ENCODE measurements at regions of chr9 and their contacts with region 1.

Region 1: DNA sequence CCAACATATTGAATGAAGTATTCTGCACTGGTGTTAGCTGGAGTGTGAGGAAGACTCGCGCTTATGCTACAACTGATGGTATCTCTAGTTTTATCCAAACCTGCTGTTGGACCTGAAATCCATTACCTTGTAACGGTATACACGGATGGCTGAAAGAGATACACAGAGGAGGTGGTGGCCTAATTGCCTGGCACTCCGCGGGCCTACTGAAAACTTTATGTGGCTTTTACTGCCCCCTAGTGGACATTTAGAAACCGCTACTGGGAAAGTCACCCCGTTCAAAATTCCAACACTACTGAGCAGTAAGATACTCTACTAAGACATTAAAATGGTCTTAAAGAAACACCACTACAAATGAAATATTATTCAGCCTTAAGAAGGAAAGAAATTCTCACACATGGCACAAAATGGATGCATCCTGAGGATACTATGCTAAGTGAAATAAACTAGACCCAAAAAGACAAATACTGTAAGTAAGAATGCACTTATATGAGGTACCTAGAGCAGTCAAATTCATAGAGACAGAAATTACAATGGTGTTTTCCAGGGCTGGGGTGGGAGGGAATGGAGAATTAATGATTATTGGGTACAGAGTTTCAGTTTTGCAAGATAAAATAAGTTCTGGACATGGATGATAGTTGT is 100.4 kb downstream of the TTLL11 start:
- DNase-seq: peak in 7 of 10 donors; percentile 53 to 77 (median 70)
- H3K4me3 ChIP-seq: no peak overlapping the region
- H3K27ac ChIP-seq: peak overlapping the region in 13 of 59 donors; percentile 2 to 58 (median 26)
- H3K27me3 ChIP-seq: no peaks in the 10 kb centered on the region
- CTCF ChIP-seq: peak; percentile 79 to 97 (median 91)

Region 2: DNA sequence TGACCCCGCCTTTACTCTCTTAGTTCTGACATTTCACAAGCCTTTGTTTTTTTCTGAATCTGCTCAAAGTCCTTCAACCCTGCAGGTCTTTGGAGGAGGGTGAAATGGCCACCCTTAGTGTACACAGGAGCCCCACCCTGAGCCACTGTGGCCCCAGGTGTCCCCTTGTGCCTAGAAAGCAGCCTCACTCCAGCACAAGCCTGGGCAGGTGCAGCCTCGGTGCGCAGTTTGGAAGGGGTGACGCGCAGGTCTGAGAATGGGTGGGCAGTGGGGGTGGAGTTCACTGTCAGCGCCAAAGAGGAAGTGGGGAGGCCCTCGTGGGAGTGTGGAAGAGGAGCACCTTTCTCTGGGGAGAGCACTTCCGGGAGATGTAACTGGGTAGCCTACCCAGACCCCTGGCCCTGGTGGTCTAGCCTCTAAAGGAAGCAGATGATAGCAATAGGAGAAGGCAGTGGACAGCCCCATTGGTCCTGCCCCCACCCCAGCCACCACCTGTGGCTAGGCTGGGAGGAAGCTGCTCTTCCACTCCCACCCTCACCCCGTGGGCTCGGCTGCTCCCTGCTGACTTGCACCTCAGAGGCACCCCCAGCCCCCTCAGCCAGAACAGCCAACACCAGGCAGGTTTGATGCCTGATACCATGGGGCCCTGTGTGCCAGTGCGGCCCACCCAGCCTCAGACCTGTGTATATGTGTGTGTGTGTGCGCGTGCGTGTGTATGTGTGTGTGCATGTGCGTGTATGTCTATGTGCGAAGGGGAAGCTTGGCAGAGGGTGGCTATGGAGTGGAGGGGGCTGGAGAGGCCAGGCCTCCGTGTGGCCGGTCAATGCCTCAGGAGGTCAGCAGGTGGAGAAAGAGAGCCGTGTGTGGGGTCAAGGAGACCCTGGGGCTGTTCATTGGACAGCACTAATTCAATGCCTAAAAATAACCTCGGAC is 358.1 kb before region 1 on chr9:
- intact Hi-C with region 1: loop called (anchors 5 to 10 kb)
- DNase-seq: peak in 2 of 10 donors; percentile 38 to 55
- H3K4me3 ChIP-seq: no peak overlapping the region
- H3K27ac ChIP-seq: peak overlapping the region in 20 of 59 donors; percentile 8 to 97 (median 90)
- H3K27me3 ChIP-seq: no peaks in the 10 kb centered on the region
- CTCF ChIP-seq: peak in 54 of 56 donors; percentile 33 to 77 (median 62)

Region 3: DNA sequence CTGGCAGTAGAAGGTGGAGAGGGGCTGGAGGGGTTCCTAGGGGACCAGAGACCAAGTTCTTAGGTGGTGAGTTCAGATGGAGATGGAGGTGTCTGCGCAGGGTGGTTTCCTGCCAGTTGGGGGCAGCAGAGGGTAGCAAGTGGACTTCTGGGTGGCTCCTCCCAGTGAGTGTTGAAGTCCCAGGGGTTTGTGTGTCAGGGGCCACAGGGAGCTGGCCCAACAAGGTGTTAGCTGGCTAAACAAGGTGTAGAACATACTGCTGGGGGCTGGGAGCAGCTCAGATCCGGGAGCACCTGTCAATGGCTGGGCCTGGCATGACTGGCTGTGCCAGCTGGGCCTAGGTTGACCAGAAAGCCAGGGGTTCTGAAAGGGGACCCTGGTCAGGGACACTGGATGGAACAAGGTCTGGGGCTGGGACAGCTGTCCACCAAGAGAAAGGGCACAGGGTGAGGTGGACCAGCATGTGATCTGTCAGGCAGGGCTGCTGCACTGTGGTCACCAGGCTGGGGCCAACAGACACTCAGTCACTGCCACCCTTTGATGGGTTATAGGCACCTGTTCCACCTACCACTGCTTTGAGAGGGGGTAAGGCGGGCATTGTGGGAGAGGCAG is 305.7 kb before region 1 on chr9:
- intact Hi-C with region 1: loop called (anchors 2 to 10 kb)
- DNase-seq: peak; percentile 72 to 85 (median 78)
- H3K4me3 ChIP-seq: no peak overlapping the region
- H3K27ac ChIP-seq: peak overlapping the region in 13 of 59 donors; percentile 4 to 71 (median 32)
- H3K27me3 ChIP-seq: no peaks in the 10 kb centered on the region
- CTCF ChIP-seq: peak; percentile 39 to 96 (median 86)

Region 4: GRCh38 chr9:121698627-121699570 is 293.8 kb before region 1 on chr9:
- intact Hi-C with region 1: loop called in 1 of 2 experiments (anchors 10 kb)
- DNase-seq: no peak
- H3K4me3 ChIP-seq: peak overlapping the region; percentile 33 to 77 (median 66)
- H3K27ac ChIP-seq: peak overlapping the region in 47 of 59 donors; percentile 2 to 88 (median 76)
- H3K27me3 ChIP-seq: no peaks in the 10 kb centered on the region
- CTCF ChIP-seq: no peak

Region 5: DNA sequence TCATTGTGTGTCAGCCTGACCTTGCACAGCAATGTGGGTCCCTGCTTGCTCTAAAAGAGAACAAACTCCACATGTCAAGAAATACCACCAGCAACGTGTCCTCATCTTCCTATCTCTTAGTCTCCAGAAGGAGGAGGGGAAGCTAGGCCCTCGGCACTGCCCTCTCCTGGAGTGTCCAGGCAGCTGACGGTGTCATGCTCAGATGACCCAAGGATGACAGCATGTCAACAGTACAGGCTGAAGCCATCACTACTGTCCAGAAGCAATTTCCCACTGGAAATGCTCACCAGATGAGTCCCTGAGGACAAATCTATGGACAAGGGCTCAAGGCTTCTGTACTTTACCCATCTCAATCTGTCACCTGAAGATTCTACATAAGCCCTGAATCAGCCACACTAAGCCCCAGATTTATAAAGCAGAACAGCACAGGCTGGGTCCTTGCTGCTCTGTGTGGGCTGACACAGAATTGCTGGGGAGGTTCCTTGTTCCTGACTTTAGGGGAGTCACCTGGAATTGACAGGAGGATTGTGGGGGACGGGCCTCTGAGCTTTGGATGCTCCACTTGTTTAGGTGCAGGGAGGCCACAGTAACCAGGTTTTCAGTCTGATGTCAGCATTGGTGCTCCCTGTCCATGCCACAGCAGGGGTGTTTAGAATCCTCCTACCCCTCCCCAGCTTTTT is 131.1 kb before region 1 on chr9:
- intact Hi-C with region 1: loop called in 1 of 2 experiments (anchors 10 kb)
- DNase-seq: peak in 6 of 10 donors; percentile 42 to 64 (median 57)
- H3K4me3 ChIP-seq: no peak overlapping the region
- H3K27ac ChIP-seq: peak overlapping the region in 22 of 59 donors; percentile 4 to 71 (median 44)
- H3K27me3 ChIP-seq: no peaks in the 10 kb centered on the region
- CTCF ChIP-seq: peak in 53 of 56 donors; percentile 21 to 73 (median 53)

Region 6: DNA sequence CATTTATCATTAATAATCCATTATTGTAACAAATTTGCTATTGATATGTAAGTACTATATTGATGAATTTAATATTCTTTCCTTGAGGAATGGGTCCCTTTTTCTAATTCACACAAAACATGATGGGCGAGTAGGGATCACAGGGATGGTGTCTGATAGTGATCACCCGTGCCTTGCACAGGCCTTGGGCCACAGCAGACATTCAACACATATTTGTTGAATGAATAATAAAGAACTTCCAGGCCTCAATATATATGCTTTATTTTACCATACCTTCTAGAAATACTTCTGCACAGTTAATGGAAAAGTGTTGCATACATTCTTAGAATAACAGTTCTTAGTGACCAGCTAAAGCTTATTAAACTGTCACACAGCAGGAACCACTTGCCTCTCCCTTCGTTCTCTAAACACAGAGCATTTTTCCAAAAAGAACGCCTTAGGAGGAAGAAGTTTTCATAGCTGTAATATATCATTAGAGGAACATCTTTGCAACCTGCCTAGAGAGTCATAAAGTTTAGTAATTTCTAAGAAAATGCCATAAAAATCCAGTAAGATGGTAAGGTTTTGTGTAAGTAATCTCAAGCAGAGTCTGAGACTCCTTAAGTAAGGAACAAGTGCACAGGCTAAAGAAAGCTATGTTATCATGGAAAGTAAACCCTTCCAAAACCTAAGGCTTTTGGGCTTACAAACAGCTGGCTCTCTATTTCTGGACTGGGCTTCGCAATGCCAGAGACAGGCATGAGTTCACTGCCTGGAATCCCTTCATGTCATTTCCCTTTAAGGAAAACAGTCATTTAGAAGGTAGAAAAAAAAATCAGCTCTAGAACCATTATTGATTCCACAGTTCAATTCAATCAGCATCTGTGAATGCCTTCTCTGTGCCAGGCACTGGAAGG is 82.7 kb after region 1 on chr9:
- intact Hi-C with region 1: no loop called
- DNase-seq: no peak
- H3K4me3 ChIP-seq: peak overlapping the region in 3 of 59 donors; percentile 3 to 20 (median 4)
- H3K27ac ChIP-seq: peak overlapping the region; percentile 20 to 89 (median 78)
- H3K27me3 ChIP-seq: no peaks in the 10 kb centered on the region
- CTCF ChIP-seq: no peak

Region 7: DNA sequence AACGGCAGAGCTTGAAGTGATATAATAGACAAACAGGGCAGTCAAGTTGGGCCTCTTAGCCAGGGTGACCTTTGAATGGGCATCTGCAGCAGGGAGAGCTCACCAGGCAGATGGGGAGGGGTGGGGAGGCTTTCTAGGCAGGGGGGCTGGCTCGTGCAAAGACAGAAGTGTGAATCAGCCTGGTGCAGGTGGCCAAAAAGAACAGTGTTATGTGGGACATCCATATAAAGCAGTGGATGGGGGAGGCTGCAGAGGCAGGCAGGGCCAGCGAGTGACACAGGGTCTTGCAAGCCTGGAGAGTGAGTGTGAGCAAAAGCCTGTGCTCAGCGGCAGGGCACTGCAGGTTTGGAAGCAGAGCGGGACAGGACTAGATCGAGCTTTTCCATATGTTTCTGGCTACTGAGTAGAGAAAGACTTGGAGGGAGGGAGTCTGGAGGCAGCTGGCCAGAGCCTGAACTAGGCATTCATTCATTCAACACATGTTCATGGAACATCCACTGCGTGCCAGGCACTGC is 114.7 kb after region 1 on chr9:
- intact Hi-C with region 1: no loop called
- DNase-seq: peak in 6 of 10 donors; percentile 41 to 78 (median 58)
- H3K4me3 ChIP-seq: no peak overlapping the region
- H3K27ac ChIP-seq: peak overlapping the region in 44 of 59 donors; percentile 12 to 84 (median 52)
- H3K27me3 ChIP-seq: no peaks in the 10 kb centered on the region
- CTCF ChIP-seq: no peak